ENCODE measurements at regions of chr3 and their contacts with region 1.

Region 1: DNA sequence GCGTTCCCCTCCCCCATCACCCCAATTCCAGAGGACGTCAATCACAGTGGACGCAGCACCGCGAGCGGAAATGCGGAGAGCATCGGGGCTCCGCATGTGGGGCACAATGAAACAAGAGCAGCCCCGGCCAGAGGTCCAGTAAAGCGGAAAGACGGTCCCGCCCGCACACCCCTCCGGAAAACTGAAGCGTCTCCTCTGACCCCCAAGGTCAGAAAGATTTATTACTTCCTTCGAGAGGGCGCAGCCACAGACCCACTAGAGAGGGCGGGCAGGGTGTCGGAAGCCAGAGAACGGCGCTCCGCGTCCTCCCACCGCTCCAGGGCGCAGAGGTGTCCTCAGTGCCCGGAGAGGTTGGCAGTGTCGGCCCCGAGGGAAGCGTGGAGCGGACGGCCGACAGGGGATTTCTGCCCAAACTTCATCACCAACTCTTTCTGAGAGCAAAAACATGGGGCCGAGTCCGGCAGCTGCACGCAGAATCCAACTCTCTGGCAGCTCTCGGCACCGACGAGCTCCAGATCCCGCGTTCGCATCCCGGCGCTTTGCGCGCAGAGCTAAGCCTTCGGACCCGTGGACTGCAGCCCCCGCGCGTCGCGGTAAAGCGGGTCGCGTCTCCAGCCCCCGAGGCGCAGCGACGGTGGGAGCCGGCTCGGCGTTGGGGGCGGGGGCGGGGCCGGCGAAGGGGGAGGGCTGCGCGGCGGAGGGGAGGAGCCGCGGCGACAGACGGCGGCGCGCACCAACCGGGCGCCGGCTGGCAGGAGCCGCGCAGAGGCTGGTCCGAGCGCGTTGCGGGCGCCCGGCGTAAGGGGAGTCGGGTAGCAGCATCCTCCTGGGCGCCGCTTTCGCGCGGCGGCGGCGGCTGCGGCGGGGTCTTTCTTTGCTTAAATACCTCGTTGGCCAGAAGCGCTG is at the start of gene CHST2:
- DNase-seq: peak in 4 of 5 donors; percentile 53 to 69 (median 62)
- H3K4me3 ChIP-seq: peak within 1 kb of the TSS; percentile 68 to 76
- H3K4me3 Mint-ChIP-seq: peak within 1 kb of the TSS; percentile 85 to 94 (median 90)
- H3K27ac ChIP-seq: peak within 1 kb of the TSS; percentile 26
- H3K27ac Mint-ChIP-seq: peak within 1 kb of the TSS; percentile 42 to 77 (median 61)
- H3K4me1 ChIP-seq: peaks cover 19% of the 10 kb centered on the region
- H3K4me1 Mint-ChIP-seq: peaks cover 18 to 36% (median 22%) of the 10 kb centered on the region in 4 donors
- H3K27me3 ChIP-seq: no peaks in the 10 kb centered on the region
- H3K27me3 Mint-ChIP-seq: peaks cover 0 to 10% of the 10 kb centered on the region in 2 donors
- total RNA-seq, gene CHST2: 1.1 TPM

Region 2: DNA sequence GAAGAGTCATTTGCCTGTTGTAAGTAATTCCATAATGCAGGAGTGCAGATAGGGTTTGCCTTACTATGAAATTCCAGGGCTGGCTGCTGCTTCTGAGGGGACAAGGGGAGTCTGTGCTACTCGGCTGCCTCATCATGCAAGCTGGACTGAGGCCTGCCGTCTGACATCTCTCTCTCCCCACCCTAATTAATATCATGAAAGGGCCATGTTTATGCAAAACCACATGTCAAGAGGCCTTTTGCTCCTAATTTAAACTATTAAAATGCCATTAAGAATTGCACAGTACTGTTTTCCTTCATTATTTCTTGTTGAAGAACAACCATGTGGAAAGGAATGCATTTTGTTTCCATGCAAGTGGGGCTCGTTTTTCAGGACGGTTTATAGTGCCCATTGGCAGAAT is 26.6 kb after region 1 on chr3:
- CTCF ChIA-PET with region 1: no interaction called
- POLR2A ChIA-PET with region 1: no interaction called
- intact Hi-C with region 1: no loop called
- DNase-seq: no peak
- H3K4me3 ChIP-seq: no peak overlapping the region
- H3K4me3 Mint-ChIP-seq: no peak overlapping the region
- H3K27ac ChIP-seq: no peak overlapping the region
- H3K27ac Mint-ChIP-seq: no peak overlapping the region
- H3K4me1 ChIP-seq: no peaks in the 10 kb centered on the region
- H3K4me1 Mint-ChIP-seq: no peaks in the 10 kb centered on the region
- H3K27me3 ChIP-seq: no peaks in the 10 kb centered on the region
- H3K27me3 Mint-ChIP-seq: no peaks in the 10 kb centered on the region

Region 3: GRCh38 chr3:143158014-143158988 is 39.0 kb after region 1 on chr3:
- CTCF ChIA-PET with region 1: no interaction called
- POLR2A ChIA-PET with region 1: no interaction called
- intact Hi-C with region 1: no loop called
- DNase-seq: no peak
- H3K4me3 ChIP-seq: no peak overlapping the region
- H3K4me3 Mint-ChIP-seq: no peak overlapping the region
- H3K27ac ChIP-seq: no peak overlapping the region
- H3K27ac Mint-ChIP-seq: no peak overlapping the region
- H3K4me1 ChIP-seq: peaks cover 3% of the 10 kb centered on the region
- H3K4me1 Mint-ChIP-seq: peaks cover 0 to 6% (median under 1%) of the 10 kb centered on the region in 4 donors
- H3K27me3 ChIP-seq: no peaks in the 10 kb centered on the region
- H3K27me3 Mint-ChIP-seq: no peaks in the 10 kb centered on the region

Region 4: GRCh38 chr3:143171141-143171970 is 52.1 kb after region 1 on chr3:
- CTCF ChIA-PET with region 1: interaction called, 4 read pairs
- POLR2A ChIA-PET with region 1: interaction called, 9 read pairs
- intact Hi-C with region 1: loop called (anchors 2 kb)
- DNase-seq: peak in 3 of 5 donors; percentile 26 to 29 (median 27)
- H3K4me3 ChIP-seq: no peak overlapping the region
- H3K4me3 Mint-ChIP-seq: peak overlapping the region; percentile 12 to 83 (median 74)
- H3K27ac ChIP-seq: peak overlapping the region; percentile 20
- H3K27ac Mint-ChIP-seq: peak overlapping the region; percentile 76 to 90 (median 86)
- H3K4me1 ChIP-seq: peaks cover 52% of the 10 kb centered on the region
- H3K4me1 Mint-ChIP-seq: peaks cover 42 to 54% (median 48%) of the 10 kb centered on the region in 4 donors
- H3K27me3 ChIP-seq: no peaks in the 10 kb centered on the region
- H3K27me3 Mint-ChIP-seq: no peaks in the 10 kb centered on the region

Region 5: DNA sequence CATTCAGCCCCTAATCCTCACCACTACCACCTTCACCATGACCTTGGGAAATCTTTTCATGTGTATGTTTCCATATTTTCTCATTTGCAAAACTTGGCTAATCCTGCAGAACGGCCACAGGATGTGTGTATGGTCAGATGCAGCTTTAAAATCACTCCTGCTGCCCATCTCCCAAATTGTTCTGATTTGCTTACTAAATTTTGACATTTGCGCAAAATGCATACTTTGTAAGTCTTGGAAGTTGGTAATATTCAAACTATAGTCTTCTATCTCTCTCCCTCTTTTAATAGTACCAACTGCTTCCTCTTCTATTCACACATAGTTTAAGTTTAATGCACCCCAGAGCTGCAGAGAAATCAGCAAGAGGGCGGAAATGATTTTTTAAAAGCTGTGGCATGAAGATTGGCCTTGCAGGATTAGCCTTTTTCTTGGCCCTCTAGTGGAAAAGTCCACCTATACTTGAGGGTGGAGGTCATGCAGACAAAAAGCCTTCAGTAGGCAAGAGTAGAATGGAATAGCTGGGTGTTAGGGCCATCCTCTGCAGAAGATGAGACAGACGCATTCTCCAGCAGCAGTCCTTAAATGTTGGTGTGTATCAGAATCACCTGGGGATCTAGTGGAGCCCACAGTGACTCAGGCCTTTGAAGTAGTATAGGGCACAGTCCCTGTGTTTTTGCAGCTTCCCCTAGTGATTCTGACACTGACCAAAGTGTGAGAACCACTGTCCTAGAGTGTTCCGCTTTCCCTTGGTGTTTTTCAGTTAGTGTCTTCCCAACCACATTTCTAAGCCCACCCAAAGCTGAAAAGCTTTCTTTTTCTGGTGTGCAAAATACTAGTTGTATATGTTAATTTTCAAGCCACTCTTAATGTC is 182.0 kb after region 1 on chr3:
- CTCF ChIA-PET with region 1: no interaction called
- POLR2A ChIA-PET with region 1: no interaction called
- intact Hi-C with region 1: loop called (anchors 1 kb)
- DNase-seq: no peak
- H3K4me3 ChIP-seq: no peak overlapping the region
- H3K4me3 Mint-ChIP-seq: no peak overlapping the region
- H3K27ac ChIP-seq: no peak overlapping the region
- H3K27ac Mint-ChIP-seq: no peak overlapping the region
- H3K4me1 ChIP-seq: no peaks in the 10 kb centered on the region
- H3K4me1 Mint-ChIP-seq: peaks cover 0 to 8% (median 0%) of the 10 kb centered on the region in 4 donors
- H3K27me3 ChIP-seq: no peaks in the 10 kb centered on the region
- H3K27me3 Mint-ChIP-seq: no peaks in the 10 kb centered on the region

Region 6: DNA sequence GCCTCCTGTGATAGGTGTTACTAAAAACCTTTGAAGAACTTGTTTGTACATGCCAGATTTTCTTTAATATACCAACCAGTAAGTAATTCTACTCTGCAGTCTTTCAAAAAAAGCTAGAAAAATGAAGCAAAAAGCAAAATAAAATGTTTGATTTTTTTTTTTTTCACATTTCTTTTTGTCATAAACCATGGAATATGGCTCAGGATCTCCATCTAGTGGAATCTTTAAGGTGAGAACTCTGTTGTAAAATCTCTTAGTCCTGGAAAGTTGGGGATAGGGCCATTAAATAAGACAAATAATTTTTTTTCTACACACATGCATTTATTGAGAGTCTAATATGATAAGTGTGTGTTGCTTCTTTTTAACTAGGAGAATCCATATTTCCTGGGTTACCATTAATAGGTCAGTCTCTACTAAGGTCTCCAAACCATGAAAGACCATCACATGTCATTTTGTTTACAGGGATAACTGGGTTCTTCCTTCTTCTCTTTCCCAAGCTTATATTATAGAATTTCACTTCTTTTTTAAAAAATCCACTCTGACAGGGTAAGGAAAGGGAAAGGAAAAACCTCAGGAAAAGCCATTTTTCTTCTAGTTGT is 644.4 kb after region 1 on chr3:
- CTCF ChIA-PET with region 1: no interaction called
- POLR2A ChIA-PET with region 1: no interaction called
- intact Hi-C with region 1: loop called (anchors 1 kb)
- DNase-seq: no peak
- H3K4me3 ChIP-seq: no peak overlapping the region
- H3K4me3 Mint-ChIP-seq: no peak overlapping the region
- H3K27ac ChIP-seq: no peak overlapping the region
- H3K27ac Mint-ChIP-seq: no peak overlapping the region
- H3K4me1 ChIP-seq: no peaks in the 10 kb centered on the region
- H3K4me1 Mint-ChIP-seq: peaks cover 8 to 15% (median 9%) of the 10 kb centered on the region in 4 donors
- H3K27me3 ChIP-seq: no peaks in the 10 kb centered on the region
- H3K27me3 Mint-ChIP-seq: no peaks in the 10 kb centered on the region